ENCODE measurements at regions of chr2 and their contacts with region 1.

Region 1: GRCh38 chr2:25286025-25286400 is 55.7 kb downstream of the DNMT3A start:
- DNase-seq: peak; percentile 77
- ATAC-seq: peak; percentile 100
- H3K4me3 Mint-ChIP-seq: peak overlapping the region; percentile 73
- H3K27ac Mint-ChIP-seq: peak overlapping the region; percentile 99
- H3K4me1 Mint-ChIP-seq: peaks cover 23% of the 10 kb centered on the region
- H3K27me3 Mint-ChIP-seq: no peaks in the 10 kb centered on the region

Region 2: DNA sequence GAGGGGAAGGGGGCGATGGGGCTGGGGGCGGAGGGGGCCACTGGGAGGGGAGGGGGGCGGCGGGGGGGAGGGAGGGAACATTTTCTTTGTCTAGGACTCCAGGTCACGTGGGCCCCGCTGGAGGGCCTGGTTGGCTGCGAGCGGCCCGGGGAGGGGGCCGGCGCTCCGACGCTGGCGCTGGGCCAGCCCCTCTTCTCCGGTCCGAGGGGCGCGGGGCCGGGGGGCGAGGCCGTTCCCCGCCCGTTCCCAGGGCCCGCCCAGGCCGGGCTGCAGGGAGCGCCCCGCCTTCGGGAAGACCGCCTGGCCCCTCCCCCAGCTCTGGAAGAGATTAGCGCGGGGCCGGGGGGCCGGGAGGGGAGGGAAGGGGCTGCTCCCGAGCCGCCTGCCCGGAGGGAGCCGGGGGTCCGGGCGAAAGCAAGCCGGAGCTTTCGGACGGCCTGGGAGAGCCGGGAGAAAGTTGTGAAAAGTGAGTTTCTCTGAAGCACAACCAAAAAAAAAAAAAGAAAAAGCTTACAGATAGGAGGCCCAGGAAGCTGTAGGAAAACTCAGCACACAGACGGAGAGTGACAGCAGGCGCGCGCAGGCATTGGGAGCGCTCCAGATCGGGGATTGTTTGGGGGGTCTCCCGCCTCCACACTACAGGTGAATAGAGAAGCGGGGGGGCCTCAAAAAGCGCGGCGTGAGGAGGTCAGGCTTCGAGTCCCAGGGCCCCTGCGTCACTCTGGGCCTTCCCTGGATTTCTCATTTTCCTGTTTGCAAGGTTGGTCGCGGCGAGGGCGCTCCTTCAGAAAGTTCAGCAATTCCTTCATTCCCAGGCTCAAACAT is 33.5 kb before region 1 on chr2:
- POLR2A ChIA-PET with region 1: interaction called, 12 read pairs
- DNase-seq: peak; percentile 68
- ATAC-seq: peak; percentile 64
- H3K4me3 Mint-ChIP-seq: peak overlapping the region; percentile 87
- H3K27ac Mint-ChIP-seq: peak overlapping the region; percentile 84
- H3K4me1 Mint-ChIP-seq: peaks cover 26% of the 10 kb centered on the region
- H3K27me3 Mint-ChIP-seq: no peaks in the 10 kb centered on the region

Region 3: DNA sequence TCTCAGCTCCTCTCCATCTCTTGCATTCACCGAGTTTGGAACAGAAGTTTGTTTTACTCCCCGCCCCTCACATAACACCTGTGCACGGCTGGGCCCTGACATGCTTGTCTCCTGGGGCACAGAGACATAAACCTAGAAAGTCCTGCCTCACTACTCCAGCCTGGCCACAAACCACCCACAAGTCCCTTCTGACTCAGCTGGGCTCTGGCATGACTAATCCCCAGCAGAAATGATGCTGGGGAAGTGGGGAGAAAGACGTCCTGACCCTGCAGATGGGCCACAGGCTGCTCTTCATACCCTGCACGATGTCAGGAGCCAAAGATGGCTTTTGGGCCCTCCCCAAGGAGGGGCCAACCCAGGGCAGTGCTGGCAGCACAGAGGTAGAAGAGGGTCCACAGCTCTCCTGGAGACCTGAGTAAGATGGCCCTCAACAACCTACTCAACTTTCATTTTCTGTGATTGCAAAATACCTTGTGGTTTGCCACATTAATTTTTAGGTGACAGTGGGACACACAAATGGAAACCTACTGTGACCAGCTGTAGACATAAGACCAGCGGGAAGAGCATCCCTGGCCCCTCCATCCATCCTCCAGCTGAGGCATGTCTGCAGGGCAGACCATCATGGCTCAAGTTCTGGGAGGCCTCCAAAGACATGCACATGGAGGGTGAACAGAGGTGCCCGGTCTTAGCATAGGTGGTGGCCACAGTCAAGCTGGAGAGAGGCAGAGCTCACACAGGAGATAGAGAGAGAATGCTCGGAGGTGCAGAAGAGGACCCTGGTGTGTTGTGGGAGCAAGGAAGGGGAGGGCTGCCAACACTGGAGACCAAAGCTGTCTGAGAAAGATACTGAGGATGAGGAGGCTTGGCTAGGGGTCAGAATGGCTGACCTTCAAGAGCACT is 15.7 kb after region 1 on chr2:
- POLR2A ChIA-PET with region 1: interaction called, 64 read pairs
- DNase-seq: peak; percentile 72
- ATAC-seq: peak; percentile 94
- H3K4me3 Mint-ChIP-seq: peak overlapping the region; percentile 20
- H3K27ac Mint-ChIP-seq: peak overlapping the region; percentile 82
- H3K4me1 Mint-ChIP-seq: peaks cover 50% of the 10 kb centered on the region
- H3K27me3 Mint-ChIP-seq: no peaks in the 10 kb centered on the region

Region 4: DNA sequence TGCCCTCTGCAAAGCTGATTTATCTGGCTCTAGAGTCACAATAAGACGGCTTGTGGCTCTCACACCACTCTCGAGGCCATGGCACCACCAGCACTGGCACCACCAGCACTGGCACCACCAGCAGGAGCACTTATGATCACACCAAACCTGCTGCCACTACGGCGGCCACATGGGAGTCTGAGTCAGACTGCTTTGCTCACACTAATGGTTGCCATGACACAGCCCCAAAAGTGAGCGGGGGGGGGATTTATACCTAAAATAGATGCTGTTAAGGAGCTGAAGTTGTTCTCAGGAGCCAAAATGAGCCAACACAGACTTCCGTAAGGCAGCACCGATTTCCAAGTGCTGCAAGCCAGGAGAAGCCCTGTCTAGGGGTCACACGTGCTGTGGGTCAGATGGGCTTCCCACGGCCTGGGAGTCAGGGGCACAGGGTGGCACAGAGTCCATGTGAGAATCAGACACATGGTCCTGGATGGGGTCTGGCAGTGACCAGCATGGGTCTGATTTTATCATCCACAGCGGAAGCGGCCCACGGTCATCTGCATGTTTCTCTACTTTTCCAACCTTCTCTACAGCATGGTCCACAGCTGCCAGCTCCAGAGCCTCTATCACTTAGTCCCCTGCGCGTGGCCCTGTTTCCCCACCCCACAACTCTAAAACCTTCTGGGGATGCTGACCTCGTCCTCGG is 39.0 kb after region 1 on chr2:
- POLR2A ChIA-PET with region 1: no interaction called
- DNase-seq: no peak
- ATAC-seq: no peak
- H3K4me3 Mint-ChIP-seq: no peak overlapping the region
- H3K27ac Mint-ChIP-seq: no peak overlapping the region
- H3K4me1 Mint-ChIP-seq: peaks cover 30% of the 10 kb centered on the region
- H3K27me3 Mint-ChIP-seq: no peaks in the 10 kb centered on the region

Measured in activated naive CD8-positive, alpha-beta T cell treated with anti-CD3 and anti-CD28 coated beads, Interleukin-2, amount 10 ng/mL, durations not matched to agents 7 days and 5 days (primary cell).